IMR-90 (cell line): ENCODE measurements at regions of chr19 and their contacts with region 1.

Region 1: GRCh38 chr19:48993175-48994034 is at the starts of genes GYS1 and RUVBL2:
- DNase-seq: peak; percentile 99
- ATAC-seq: peak; percentile 93
- H3K4me3 ChIP-seq: peak within 1 kb of the TSS; percentile 78
- H3K27ac ChIP-seq: peak within 1 kb of the TSS; percentile 85
- H3K4me1 ChIP-seq: peaks cover 12% of the 10 kb centered on the region
- H3K27me3 ChIP-seq: no peaks in the 10 kb centered on the region
- CTCF ChIP-seq: peak; percentile 99
- POLR2A ChIP-seq: peak; percentile 77
- RAD21 ChIP-seq: 0 out of 2 replicates have a peak, but pooled peaks have one; percentile 1
- total RNA-seq, gene GYS1: 36.1 and 38.7 TPM in 2 replicates
- total RNA-seq, gene RUVBL2: 354 and 391 TPM in 2 replicates

Region 2: GRCh38 chr19:49056010-49056901 is 62.9 kb after region 1 on chr19:
- CTCF ChIA-PET with region 1: interaction called, 6 read pairs
- POLR2A ChIA-PET with region 1: no interaction called
- dilution Hi-C with region 1: no loop called
- in situ Hi-C with region 1: no loop called
- intact Hi-C with region 1: loop called (anchors 5 kb)
- DNase-seq: peak; percentile 28
- ATAC-seq: peak; percentile 90
- H3K4me3 ChIP-seq: peak overlapping the region; percentile 61
- H3K27ac ChIP-seq: peak overlapping the region; percentile 17; the same call in 1 of the 2 replicates
- H3K4me1 ChIP-seq: peaks cover 2% of the 10 kb centered on the region; the same call in 1 of the 2 replicates
- H3K27me3 ChIP-seq: peaks cover 6% of the 10 kb centered on the region; the same call in 1 of the 2 replicates
- CTCF ChIP-seq: 0 out of 2 replicates have a peak, but pooled peaks have one; percentile 22
- POLR2A ChIP-seq: no peak
- RAD21 ChIP-seq: no peak

Region 3: DNA sequence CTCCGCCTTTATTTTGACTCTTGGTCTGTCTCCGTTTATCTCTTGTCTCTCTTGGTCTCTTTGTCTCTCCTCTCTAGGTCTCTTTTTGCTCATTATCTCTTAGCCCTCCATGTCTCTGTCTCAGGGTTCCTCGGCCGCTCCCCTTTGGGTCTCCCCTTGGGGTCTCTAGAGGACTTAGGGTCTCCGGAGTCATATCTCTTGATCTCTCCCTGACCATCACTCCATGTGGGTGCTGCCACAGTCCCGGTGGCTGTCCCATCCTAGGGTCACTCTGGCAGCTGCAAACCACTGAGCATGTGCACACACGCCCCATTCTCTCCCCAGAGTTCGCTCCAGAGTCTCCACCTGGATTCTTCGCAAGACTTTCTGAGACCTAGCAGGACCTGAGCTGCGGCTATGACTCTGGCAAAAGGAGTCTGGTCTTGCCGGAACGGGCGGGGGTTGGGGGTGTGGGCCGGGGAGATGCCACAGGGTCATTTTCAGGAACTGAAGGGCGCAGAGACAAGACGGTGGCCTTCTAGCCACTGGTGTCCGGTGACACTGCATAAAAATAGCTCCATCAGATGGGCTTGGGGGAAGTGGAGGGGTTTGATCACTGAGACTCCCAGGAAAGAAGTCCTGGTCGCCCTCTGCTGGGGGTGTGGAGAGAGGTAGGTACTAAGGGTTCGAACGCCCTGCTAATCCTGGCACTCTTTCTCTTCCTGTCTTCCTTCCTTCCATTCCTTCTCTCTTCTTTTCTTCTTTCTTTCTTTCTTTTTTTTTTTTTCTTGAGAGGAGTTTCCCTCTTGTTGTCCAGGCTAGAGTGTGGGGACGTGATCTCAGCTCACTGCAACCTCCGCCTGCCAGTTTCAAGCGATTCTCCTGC is 80.3 kb after region 1 on chr19:
- CTCF ChIA-PET with region 1: interaction called, 4 read pairs
- POLR2A ChIA-PET with region 1: no interaction called
- dilution Hi-C with region 1: no loop called
- in situ Hi-C with region 1: no loop called
- intact Hi-C with region 1: loop called (anchors 5 kb)
- DNase-seq: no peak
- ATAC-seq: peak; percentile 35; the same call in 1 of the 2 replicates
- H3K4me3 ChIP-seq: no peak overlapping the region
- H3K27ac ChIP-seq: no peak overlapping the region
- H3K4me1 ChIP-seq: no peaks in the 10 kb centered on the region
- H3K27me3 ChIP-seq: peaks cover 36% of the 10 kb centered on the region
- CTCF ChIP-seq: peak; percentile 15; the same call in 1 of the 2 replicates
- POLR2A ChIP-seq: no peak
- RAD21 ChIP-seq: peak; percentile 35

Region 4: GRCh38 chr19:49200238-49200862 is 206.9 kb after region 1 on chr19:
- CTCF ChIA-PET with region 1: no interaction called
- POLR2A ChIA-PET with region 1: no interaction called
- dilution Hi-C with region 1: no loop called
- in situ Hi-C with region 1: no loop called
- intact Hi-C with region 1: loop called (anchors 10 kb)
- DNase-seq: no peak
- ATAC-seq: peak; percentile 28; the same call in 1 of the 2 replicates
- H3K4me3 ChIP-seq: no peak overlapping the region
- H3K27ac ChIP-seq: no peak overlapping the region
- H3K4me1 ChIP-seq: no peaks in the 10 kb centered on the region
- H3K27me3 ChIP-seq: no peaks in the 10 kb centered on the region
- CTCF ChIP-seq: no peak
- POLR2A ChIP-seq: no peak
- RAD21 ChIP-seq: no peak

Region 5: DNA sequence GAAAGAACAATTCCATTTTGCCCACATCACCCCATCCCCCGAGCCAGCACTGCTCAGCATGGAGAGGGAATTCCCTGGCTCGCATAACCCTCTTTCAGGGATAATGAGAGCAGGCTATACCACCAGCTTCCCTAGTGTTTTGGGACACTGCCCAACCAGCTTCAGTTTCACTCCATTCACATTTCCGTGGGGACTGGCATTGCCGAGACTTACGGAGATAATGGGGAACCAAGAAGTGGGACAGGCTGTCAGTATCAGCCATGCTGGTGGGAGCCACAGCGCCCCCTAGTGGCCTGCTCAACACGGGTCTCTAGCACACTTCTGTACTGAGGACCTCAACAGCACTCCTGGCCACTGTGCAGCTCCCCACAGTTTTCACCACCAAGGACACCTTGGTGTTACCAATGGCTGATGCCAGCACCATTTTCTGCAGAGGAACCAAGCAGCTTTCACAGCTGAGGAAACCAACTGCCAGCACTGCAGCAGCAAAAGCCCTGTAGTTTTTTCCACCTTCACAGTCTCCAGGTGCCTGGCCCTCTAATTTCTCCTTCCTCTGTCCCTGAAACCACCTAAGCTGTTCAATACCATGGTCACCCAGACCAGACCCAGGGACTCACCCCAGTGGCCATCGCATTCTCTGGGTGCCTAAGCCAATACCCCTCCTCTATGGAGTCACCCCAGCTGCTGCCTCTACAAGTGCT is 307.9 kb after region 1 on chr19:
- CTCF ChIA-PET with region 1: no interaction called
- POLR2A ChIA-PET with region 1: no interaction called
- dilution Hi-C with region 1: no loop called
- in situ Hi-C with region 1: no loop called
- intact Hi-C with region 1: no loop called
- DNase-seq: peak; percentile 43
- ATAC-seq: peak; percentile 88
- H3K4me3 ChIP-seq: peak overlapping the region; percentile 16; the same call in 1 of the 2 replicates
- H3K27ac ChIP-seq: no peak overlapping the region
- H3K4me1 ChIP-seq: no peaks in the 10 kb centered on the region
- H3K27me3 ChIP-seq: no peaks in the 10 kb centered on the region
- CTCF ChIP-seq: peak; percentile 70
- POLR2A ChIP-seq: no peak
- RAD21 ChIP-seq: peak; percentile 47